PC-3 (cell line): ENCODE measurements at regions of chr3 and their contacts with region 1.

Region 1: DNA sequence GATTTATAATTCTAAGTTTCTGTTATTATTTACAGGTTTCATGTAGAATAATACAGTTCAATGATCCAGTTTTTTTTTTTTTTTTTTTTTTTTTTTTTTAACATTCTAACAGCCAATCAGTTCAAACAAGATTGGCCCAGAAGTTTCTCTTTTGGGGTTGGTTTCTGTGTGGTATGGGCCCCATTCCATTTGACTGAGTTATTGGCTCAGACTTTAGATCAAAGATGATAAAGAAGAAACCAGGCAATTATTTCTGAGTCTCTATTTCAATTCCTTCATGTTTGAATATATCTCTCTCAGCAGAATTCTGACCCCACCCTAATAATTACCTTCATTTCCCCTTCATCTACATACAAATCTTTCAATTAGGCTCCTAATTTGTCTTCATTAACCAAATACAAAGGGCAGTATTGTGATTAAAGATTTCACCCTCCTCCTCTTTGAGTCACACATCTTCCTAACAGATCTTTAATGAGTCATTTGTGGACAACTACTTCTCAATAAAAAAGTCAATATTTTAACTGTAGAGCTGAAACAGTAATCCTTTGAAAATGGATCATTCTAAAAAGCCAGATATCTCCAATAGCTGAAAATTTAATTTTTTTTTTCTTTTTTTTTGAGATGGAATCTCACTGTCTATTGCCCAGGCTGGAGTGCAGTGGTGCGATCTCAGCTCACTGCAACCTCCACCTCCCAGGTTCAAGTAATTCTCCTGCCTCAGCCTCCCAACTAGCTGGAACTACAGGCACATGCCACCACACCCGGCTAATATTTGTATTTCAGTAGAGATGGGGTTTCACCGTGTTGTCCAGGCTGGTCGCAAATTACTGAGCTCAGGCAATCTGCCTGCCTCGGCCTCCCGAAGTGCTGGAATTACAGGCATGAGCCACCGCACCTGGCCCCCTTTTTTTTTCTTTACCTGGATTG is 878.8 kb downstream of the NAALADL2 start:
- DNase-seq: peak; percentile 84
- ATAC-seq: peak; percentile 80
- H3K4me3 ChIP-seq: peak overlapping the region; percentile 23; the same call in 1 of the 2 replicates
- H3K27ac ChIP-seq: peak overlapping the region; percentile 94
- H3K4me1 ChIP-seq: peaks cover 40% of the 10 kb centered on the region
- H3K27me3 ChIP-seq: no peaks in the 10 kb centered on the region
- CTCF ChIP-seq: no peak

Region 2: DNA sequence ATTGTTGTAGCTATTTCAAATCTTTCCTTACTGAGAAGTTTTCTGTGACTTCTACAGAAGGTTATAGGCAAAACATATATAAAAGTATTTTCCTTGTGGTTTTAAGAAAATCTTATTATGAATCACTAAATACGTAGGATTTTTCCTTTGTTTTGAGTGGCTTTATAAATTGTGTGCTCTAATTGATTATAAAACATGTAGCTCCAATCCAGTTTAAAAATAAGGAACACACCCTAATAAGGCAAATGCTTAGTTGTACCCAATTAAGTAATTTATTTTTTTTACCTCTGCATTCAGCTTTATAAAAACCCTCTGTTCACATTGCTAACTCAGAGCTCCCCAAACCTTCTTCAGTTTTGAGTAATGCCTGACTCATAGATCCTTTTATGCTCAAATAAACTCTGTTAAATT is 470.8 kb before region 1 on chr3:
- CTCF ChIA-PET with region 1: no interaction called
- POLR2A ChIA-PET with region 1: no interaction called
- intact Hi-C with region 1: loop called (anchors 5 kb)
- DNase-seq: peak; percentile 62
- ATAC-seq: peak; percentile 81
- H3K4me3 ChIP-seq: peak overlapping the region; percentile 14
- H3K27ac ChIP-seq: peak overlapping the region; percentile 94
- H3K4me1 ChIP-seq: peaks cover 27% of the 10 kb centered on the region
- H3K27me3 ChIP-seq: no peaks in the 10 kb centered on the region
- CTCF ChIP-seq: no peak

Region 3: GRCh38 chr3:175713268-175713667 is 24.6 kb before region 1 on chr3:
- CTCF ChIA-PET with region 1: no interaction called
- POLR2A ChIA-PET with region 1: no interaction called
- intact Hi-C with region 1: no loop called
- DNase-seq: no peak
- ATAC-seq: no peak
- H3K4me3 ChIP-seq: no peak overlapping the region
- H3K27ac ChIP-seq: no peak overlapping the region
- H3K4me1 ChIP-seq: no peaks in the 10 kb centered on the region
- H3K27me3 ChIP-seq: no peaks in the 10 kb centered on the region
- CTCF ChIP-seq: no peak

Region 4: GRCh38 chr3:175839366-175840005 is 101.6 kb after region 1 on chr3:
- CTCF ChIA-PET with region 1: no interaction called
- POLR2A ChIA-PET with region 1: no interaction called
- intact Hi-C with region 1: no loop called
- DNase-seq: no peak
- ATAC-seq: no peak
- H3K4me3 ChIP-seq: no peak overlapping the region
- H3K27ac ChIP-seq: no peak overlapping the region
- H3K4me1 ChIP-seq: no peaks in the 10 kb centered on the region
- H3K27me3 ChIP-seq: no peaks in the 10 kb centered on the region
- CTCF ChIP-seq: no peak